Activated CD4-positive, alpha-beta memory T cell treated with anti-CD3 and anti-CD28 coated beads for 36 hours (primary cell): ENCODE measurements at regions of chr11 and their contacts with region 1.

Region 1: DNA sequence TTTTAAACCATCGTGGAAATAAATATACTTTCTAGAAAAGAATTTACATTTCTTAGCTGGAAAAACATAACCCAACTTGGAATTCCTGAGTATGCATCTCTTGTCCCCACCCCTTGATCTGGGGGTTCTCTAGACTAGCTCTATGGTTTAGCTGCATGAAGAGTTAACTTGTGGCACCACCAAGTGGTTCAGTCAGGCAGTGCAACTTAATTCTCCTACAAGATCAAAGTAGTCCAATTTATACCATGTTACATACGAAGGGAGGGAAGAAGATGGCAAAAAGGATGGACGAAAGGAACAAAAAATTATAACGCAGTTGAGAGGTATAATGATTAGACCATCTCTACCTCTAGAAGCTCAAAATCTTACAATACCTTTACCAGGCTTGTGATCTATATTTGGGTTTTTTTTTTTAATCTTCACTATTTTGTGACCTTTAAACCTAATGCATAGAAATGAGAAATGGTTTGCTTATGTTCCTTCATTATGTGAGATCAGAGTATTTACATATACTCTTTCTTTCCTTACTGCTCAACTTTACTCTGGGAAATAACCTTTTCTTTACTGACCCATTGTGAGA is 28.5 kb upstream of the ALKBH3 start:
- DNase-seq: peak; percentile 73
- H3K4me3 Mint-ChIP-seq: no peak overlapping the region
- H3K27ac Mint-ChIP-seq: no peak overlapping the region
- H3K4me1 Mint-ChIP-seq: no peaks in the 10 kb centered on the region
- H3K27me3 Mint-ChIP-seq: no peaks in the 10 kb centered on the region

Region 2: DNA sequence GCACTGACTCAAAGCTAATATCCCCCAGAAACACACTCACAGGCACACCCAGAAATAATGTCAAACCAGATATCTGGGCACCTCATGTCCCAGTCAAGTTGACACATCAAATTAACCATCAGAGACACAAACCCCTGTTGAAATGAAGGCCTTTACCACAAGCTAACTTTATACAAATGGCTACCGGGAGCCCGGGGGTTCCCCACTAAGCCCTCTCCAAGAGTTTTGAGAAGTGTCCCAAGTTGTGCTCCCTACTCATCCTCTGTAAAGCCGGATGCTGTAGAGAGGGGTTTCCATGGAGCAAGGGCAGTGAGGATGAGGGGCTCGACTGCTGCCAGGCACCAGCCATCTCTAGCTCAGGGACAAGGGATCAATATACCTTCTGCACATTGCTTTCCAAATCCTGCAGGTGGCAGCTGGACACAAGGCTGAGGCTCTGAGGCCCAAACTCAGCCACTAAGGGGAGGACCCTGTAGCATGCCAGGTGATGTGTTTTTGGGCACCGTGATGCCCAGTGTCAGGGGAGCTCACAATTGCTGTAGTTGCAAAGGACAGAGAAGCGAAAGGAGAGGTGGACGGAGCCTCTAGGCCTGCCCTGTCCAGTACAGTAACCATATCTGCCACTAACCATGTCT is 347.7 kb before region 1 on chr11:
- CTCF ChIA-PET with region 1: interaction called, 13 read pairs
- POLR2A ChIA-PET with region 1: no interaction called
- intact Hi-C with region 1: no loop called
- DNase-seq: peak; percentile 16
- H3K4me3 Mint-ChIP-seq: no peak overlapping the region
- H3K27ac Mint-ChIP-seq: no peak overlapping the region
- H3K4me1 Mint-ChIP-seq: no peaks in the 10 kb centered on the region
- H3K27me3 Mint-ChIP-seq: peaks cover 11% of the 10 kb centered on the region

Region 3: DNA sequence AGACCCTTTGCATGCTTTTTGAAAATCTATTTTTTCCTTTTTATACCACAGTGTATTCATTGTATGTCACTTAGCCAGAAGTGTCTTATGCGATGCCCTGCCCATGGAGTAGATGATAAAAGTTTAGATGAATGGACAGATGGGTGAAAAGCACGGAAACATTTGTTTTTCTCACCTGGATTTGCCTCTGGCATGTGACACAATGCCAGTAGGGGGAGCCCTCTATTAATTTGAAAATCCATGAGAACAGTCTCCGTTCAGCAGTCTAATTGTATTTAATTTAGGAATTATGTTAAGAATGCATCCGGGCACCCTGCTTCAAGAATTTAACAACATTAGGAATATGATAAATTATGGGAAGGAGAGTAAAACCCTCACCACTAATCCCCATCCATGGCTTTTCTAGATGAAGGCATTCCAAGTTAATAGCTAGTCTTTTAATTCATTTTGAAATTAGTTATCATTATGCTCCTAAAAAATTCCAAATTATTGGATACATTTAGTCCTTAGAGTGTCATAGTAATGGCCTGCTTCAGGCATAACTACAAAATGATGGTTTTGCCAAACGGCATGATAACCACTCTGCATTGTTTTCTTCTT is 26.8 kb before region 1 on chr11:
- CTCF ChIA-PET with region 1: interaction called, 105 read pairs
- POLR2A ChIA-PET with region 1: no interaction called
- intact Hi-C with region 1: loop called (anchors 1 kb)
- DNase-seq: no peak
- H3K4me3 Mint-ChIP-seq: no peak overlapping the region
- H3K27ac Mint-ChIP-seq: no peak overlapping the region
- H3K4me1 Mint-ChIP-seq: peaks cover 2% of the 10 kb centered on the region
- H3K27me3 Mint-ChIP-seq: no peaks in the 10 kb centered on the region

Region 4: DNA sequence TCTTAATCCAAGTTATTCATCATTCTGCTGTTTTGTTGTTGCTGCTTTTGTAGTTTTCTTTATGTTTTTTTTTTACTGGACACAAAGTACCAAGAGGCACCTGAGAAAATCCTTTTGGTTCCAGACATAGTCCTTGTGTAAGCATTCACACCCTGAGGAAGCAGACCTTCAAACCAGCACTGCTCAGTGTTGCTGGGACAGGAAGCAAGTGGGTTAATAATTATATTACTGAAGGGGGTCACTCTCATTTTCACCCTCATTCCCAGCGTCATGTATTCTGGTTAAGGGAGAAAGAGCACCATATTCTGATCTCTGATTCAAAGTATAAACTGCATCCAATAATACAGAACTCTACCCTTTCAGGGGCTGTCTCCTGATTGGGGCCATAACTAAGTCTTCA is 22.6 kb after region 1 on chr11:
- CTCF ChIA-PET with region 1: no interaction called
- POLR2A ChIA-PET with region 1: no interaction called
- intact Hi-C with region 1: no loop called
- DNase-seq: no peak
- H3K4me3 Mint-ChIP-seq: no peak overlapping the region
- H3K27ac Mint-ChIP-seq: no peak overlapping the region
- H3K4me1 Mint-ChIP-seq: no peaks in the 10 kb centered on the region
- H3K27me3 Mint-ChIP-seq: peaks cover 51% of the 10 kb centered on the region